ENCODE measurements at regions of chr17 and their contacts with region 1.

Region 1: GRCh38 chr17:38735161-38735997 is 5.2 kb downstream of the CISD3 start:
- DNase-seq: peak; percentile 82
- ATAC-seq: no peak
- H3K4me3 Mint-ChIP-seq: no peak overlapping the region
- H3K27ac Mint-ChIP-seq: no peak overlapping the region
- H3K4me1 Mint-ChIP-seq: peaks cover 41% of the 10 kb centered on the region
- H3K27me3 Mint-ChIP-seq: no peaks in the 10 kb centered on the region

Region 2: GRCh38 chr17:38674749-38675615 is 60.4 kb before region 1 on chr17 and contains the start of gene EPOP:
- CTCF ChIA-PET with region 1: interaction called, 141 read pairs
- POLR2A ChIA-PET with region 1: interaction called, 9 read pairs
- DNase-seq: peak; percentile 91
- ATAC-seq: peak; percentile 89
- H3K4me3 Mint-ChIP-seq: peak within 1 kb of the TSS; percentile 54
- H3K27ac Mint-ChIP-seq: peak within 1 kb of the TSS; percentile 60
- H3K4me1 Mint-ChIP-seq: peaks cover 40% of the 10 kb centered on the region
- H3K27me3 Mint-ChIP-seq: peaks cover 22% of the 10 kb centered on the region
- total RNA-seq, gene EPOP: 11.4 to 11.6 TPM

Region 3: DNA sequence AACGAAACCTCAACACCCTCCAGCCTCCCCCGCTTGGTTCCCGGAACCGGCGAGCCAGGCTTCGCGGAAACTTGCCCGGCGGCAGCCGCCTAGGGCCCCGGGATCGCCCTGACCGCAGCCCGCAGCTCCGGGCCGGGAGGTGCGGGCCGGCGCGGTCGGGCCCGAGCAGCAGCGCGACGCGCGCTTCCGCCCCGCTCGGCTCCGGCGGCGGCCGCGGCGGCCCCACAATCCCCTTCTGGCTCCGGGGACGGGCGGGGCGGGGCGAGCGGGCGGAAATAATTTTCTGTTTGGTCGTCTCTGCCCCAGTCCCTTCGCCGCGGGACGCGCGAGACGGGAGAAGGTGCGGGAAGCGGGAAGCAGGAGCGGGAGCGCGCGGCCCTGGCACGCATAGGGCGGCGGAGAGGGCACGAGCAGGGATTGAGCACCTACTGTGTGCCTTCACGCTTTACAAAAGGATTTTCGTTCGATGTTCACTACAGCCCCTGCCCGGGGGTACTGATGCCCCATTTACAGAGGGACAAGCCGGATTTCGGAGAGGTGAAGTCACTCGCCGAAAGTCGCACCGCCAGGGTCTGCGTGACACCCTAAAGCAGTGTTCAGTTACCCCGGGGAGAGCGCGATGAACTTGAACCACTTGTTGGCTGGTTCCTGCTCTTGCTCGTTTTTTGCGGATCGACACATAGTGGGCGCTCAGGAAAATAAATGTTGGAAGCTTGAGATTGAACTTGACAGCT is 33.0 kb before region 1 on chr17:
- CTCF ChIA-PET with region 1: interaction called, 21 read pairs
- POLR2A ChIA-PET with region 1: interaction called, 9 read pairs
- DNase-seq: peak; percentile 85
- ATAC-seq: peak; percentile 47
- H3K4me3 Mint-ChIP-seq: peak overlapping the region; percentile 87
- H3K27ac Mint-ChIP-seq: peak overlapping the region; percentile 97
- H3K4me1 Mint-ChIP-seq: peaks cover 52% of the 10 kb centered on the region
- H3K27me3 Mint-ChIP-seq: no peaks in the 10 kb centered on the region

Region 4: GRCh38 chr17:38724337-38724988 is 10.9 kb before region 1 on chr17:
- CTCF ChIA-PET with region 1: interaction called, 13 read pairs
- POLR2A ChIA-PET with region 1: no interaction called
- DNase-seq: no peak
- ATAC-seq: no peak
- H3K4me3 Mint-ChIP-seq: no peak overlapping the region
- H3K27ac Mint-ChIP-seq: peak overlapping the region; percentile 52
- H3K4me1 Mint-ChIP-seq: peaks cover 41% of the 10 kb centered on the region
- H3K27me3 Mint-ChIP-seq: no peaks in the 10 kb centered on the region